GM12878 (cell line): ENCODE measurements at regions of chr11 and their contacts with region 1.

Region 1: GRCh38 chr11:5291207-5291838 is 10.4 kb downstream of the OR51B4 start:
- DNase-seq: no peak
- ATAC-seq: peak; percentile 97
- H3K4me3 ChIP-seq: no peak overlapping the region
- H3K27ac ChIP-seq: no peak overlapping the region
- H3K4me1 ChIP-seq: no peaks in the 10 kb centered on the region
- H3K27me3 ChIP-seq: no peaks in the 10 kb centered on the region
- CTCF ChIP-seq: peak; percentile 48 to 57 (median 56)
- EP300 ChIP-seq: no peak
- POLR2A ChIP-seq: no peak
- RAD21 ChIP-seq: peak; percentile 62

Region 2: DNA sequence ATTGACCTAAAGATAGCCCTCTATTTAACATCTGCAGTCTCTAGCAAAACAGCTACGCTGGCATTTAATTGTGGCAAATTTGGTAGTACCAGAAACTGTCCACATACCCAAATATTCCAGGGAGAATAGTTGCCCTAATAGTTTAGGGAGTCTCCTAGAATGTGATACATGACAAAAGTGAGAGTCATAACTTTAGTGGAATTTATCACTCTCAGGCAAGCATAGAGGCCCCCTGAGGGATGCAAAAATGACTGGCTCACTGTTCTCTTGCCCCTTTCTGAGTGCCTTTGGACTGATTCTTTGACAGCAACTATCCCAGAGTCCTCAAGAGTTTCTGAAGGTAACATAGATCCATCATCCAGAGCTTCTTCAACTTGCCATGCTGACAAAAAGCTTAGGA is 12.7 kb after region 1 on chr11:
- CTCF ChIA-PET with region 1: no interaction called
- POLR2A ChIA-PET with region 1: no interaction called
- RAD21 ChIA-PET with region 1: no interaction called
- SMC1A ChIA-PET with region 1: no interaction called
- in situ Hi-C with region 1: no loop called
- intact Hi-C with region 1: no loop called
- DNase-seq: no peak
- ATAC-seq: no peak
- H3K4me3 ChIP-seq: no peak overlapping the region
- H3K27ac ChIP-seq: no peak overlapping the region
- H3K4me1 ChIP-seq: no peaks in the 10 kb centered on the region
- H3K27me3 ChIP-seq: no peaks in the 10 kb centered on the region; a peak in 1 of 4 replicates
- CTCF ChIP-seq: no peak
- EP300 ChIP-seq: no peak
- POLR2A ChIP-seq: no peak
- RAD21 ChIP-seq: no peak

Region 3: DNA sequence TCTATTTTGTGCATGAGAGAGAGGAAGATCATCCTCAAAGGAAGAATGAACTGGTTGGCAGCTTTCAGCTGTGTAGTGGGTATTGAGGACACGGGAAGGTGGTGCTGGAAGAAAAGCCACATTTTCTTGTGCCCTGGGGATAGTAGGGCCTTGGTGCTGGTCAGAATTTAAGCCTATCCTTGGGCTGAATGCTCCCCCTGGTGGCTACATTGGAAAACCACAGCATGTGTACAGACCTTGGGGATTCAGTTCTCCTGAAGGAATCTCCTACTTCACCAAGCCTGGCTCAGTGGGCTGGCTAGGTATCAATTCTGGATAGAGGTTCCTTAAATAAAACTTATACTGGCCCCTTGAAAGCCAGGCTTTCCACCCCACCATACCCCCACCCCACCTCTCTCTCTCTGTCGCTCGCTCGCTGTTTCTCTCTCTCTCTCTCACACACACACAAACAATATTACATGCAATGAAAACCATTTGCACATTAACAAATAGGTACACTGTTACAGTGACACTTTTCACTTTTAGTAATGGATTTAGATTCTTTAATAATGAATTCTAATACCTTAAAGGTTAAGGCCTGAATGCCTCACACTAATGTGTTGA is 89.5 kb after region 1 on chr11:
- CTCF ChIA-PET with region 1: no interaction called
- POLR2A ChIA-PET with region 1: no interaction called
- RAD21 ChIA-PET with region 1: no interaction called
- SMC1A ChIA-PET with region 1: no interaction called
- in situ Hi-C with region 1: no loop called
- intact Hi-C with region 1: loop called (anchors 1 kb)
- DNase-seq: no peak
- ATAC-seq: peak; percentile 98
- H3K4me3 ChIP-seq: no peak overlapping the region
- H3K27ac ChIP-seq: no peak overlapping the region
- H3K4me1 ChIP-seq: no peaks in the 10 kb centered on the region
- H3K27me3 ChIP-seq: no peaks in the 10 kb centered on the region
- CTCF ChIP-seq: peak; percentile 71 to 83 (median 80)
- EP300 ChIP-seq: no peak
- POLR2A ChIP-seq: no peak
- RAD21 ChIP-seq: peak; percentile 83

Region 4: DNA sequence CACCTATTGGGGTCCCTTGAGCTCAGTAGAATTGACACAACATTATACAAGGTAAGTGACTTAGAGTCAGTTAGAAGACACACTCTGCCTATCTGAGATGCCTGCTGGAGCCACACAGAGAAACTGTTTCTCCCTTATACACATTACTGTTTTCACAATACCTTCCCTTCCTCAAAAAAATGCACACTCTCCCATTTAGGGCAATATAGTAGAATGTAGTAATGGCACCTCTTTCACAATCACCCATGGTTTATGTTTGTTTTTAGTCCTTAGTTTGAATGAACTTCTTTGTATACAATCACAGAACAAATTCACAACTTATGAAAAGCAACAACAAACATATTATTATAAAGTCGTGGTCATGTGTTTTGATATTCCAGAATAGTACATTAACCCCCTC is 242.7 kb after region 1 on chr11:
- CTCF ChIA-PET with region 1: no interaction called
- POLR2A ChIA-PET with region 1: no interaction called
- RAD21 ChIA-PET with region 1: no interaction called
- SMC1A ChIA-PET with region 1: no interaction called
- in situ Hi-C with region 1: no loop called
- intact Hi-C with region 1: no loop called
- DNase-seq: no peak
- ATAC-seq: no peak
- H3K4me3 ChIP-seq: no peak overlapping the region
- H3K27ac ChIP-seq: no peak overlapping the region
- H3K4me1 ChIP-seq: no peaks in the 10 kb centered on the region
- H3K27me3 ChIP-seq: no peaks in the 10 kb centered on the region
- CTCF ChIP-seq: no peak
- EP300 ChIP-seq: no peak
- POLR2A ChIP-seq: no peak
- RAD21 ChIP-seq: no peak